ENCODE measurements at regions of chr17 and their contacts with region 1.

Region 1: DNA sequence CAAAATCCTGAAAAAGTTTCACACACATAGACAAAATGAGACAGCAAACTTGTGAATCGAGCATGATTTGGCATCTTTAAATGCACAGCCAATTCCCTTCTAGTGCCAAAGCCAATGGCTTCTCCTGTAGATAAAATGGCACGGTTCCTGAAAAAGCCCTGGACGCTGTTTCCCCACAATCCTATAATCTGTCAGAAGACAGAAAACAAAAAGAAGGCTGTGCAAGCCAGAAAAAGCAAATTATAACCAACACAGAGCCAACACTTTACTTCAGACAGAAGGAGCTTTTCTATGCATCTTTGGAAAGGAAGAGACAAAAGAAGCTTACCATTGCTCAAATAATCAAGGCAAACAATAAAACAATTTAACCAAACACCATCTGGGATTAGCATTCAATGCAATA is 23.8 kb downstream of the FAM222B start:
- DNase-seq: no peak
- H3K4me3 ChIP-seq: no peak overlapping the region
- H3K27ac ChIP-seq: no peak overlapping the region
- H3K4me1 ChIP-seq: peaks cover 0 to 2% (median 0%) of the 10 kb centered on the region in 4 experiments
- H3K27me3 ChIP-seq: no peaks in the 10 kb centered on the region

Region 2: DNA sequence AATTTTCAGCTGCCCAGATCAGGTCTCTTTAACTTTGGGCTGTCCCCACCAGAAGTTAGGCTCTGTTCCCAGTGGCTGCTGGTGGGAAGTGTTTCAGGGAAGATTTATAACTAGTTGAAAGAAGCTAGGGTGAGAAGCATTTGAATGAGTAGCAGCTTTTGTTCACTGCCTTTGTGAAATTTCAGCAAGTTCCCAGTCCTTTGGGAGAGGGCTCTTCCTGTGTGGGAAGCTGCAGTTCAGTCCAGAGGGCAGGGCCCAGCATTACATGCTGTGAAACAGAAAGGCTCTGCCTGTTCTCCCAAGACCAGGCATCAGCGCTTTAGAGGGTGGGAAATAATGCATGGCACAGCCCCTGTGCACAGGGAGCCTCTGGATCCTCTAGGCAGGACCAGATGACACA is 125.0 kb before region 1 on chr17:
- CTCF ChIA-PET with region 1: no interaction called
- POLR2A ChIA-PET with region 1: no interaction called
- DNase-seq: no peak
- H3K4me3 ChIP-seq: no peak overlapping the region
- H3K27ac ChIP-seq: no peak overlapping the region
- H3K4me1 ChIP-seq: no peaks in the 10 kb centered on the region
- H3K27me3 ChIP-seq: no peaks in the 10 kb centered on the region

Region 3: DNA sequence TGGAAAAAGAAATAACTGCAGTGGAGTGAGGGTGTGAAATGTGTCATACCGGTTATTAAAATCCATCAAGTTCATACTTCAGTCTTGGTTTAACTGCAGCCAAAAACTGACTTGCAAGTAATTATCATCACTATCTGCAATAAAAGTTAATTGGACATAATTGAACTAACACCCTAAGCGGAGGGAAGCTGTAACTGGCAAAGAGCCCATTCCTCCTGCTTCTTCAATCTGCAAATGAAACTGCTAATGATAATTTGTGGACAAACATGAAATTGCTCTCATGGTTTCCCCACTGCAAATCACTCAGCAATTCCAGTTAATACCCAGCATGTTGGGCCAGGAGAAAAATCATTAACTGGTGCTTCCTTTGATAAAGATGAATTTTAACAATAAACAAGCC is 22.8 kb before region 1 on chr17:
- CTCF ChIA-PET with region 1: no interaction called
- POLR2A ChIA-PET with region 1: no interaction called
- DNase-seq: no peak
- H3K4me3 ChIP-seq: no peak overlapping the region
- H3K27ac ChIP-seq: no peak overlapping the region
- H3K4me1 ChIP-seq: peaks cover 0 to 8% (median 6%) of the 10 kb centered on the region in 4 experiments
- H3K27me3 ChIP-seq: no peaks in the 10 kb centered on the region

Region 4: DNA sequence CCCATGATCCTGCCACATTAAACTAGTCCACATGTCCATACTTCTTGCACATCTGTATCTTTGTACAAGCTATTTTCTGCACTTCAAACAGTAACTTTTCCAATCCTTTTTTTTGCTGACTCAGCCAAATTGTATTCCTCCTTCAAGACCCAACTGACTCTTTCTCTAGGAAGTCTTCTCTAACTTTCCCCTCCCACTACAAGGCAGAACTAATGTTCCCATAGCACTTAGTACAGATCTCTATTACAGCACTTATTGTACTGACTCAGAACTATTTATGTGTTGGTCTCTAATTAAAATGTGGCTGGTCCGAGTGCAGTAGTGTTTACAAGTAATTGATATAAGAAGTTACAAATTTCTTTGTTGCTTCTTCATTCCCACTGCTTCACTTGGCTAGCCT is 15.6 kb after region 1 on chr17:
- CTCF ChIA-PET with region 1: interaction called, 12 read pairs
- POLR2A ChIA-PET with region 1: no interaction called
- DNase-seq: no peak
- H3K4me3 ChIP-seq: no peak overlapping the region
- H3K27ac ChIP-seq: no peak overlapping the region
- H3K4me1 ChIP-seq: peaks cover 0 to 4% (median under 1%) of the 10 kb centered on the region in 4 experiments
- H3K27me3 ChIP-seq: no peaks in the 10 kb centered on the region